Heart left ventricle (tissue), 16 donors: ENCODE measurements at regions of chr14 and their contacts with region 1.

Region 1: DNA sequence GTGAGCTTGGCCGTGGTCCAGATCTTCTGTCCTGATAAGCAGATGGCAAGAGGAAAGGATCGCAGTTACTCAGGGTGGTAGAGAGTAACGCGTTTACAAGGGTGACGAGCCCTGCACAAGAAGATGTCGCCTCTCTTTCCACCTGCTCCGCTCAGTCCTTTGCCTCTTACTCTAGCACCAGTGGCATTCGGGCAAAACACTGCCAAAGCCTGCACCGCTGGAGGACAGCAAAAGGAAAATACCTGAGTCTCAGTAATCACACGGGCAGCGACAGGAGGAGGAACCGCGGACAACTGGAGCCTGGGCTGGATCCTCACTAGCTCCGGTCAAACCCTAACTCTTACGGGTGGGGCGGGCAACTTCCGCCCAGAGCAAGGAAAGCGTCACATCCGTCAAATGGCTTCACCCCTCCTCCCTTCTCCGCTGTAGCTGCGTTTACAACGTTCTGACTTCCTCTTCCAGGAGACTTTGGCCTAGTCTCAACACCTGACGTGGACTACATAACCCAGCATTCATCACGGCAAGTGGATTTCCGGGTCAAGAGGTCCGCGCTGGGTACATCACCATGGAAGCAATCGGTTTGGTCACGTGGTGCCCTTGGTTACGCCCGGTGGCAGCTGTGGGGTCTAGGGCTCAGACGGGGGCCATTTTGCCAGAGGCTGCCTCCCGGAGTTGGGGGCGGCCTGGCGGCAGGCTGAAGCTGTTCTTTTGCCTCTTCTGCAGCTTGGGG is at the starts of genes KLHL28 and TOGARAM1:
- DNase-seq: peak; percentile 94 to 98 (median 98)
- ATAC-seq: peak; percentile 95 to 98 (median 96)
- H3K4me3 ChIP-seq: peak within 1 kb of the TSS; percentile 65 to 97 (median 78)
- H3K27ac ChIP-seq: peak within 1 kb of the TSS; percentile 67 to 93 (median 88)
- H3K4me1 ChIP-seq: peaks cover 8 to 79% (median 46%) of the 10 kb centered on the region in 12 donors
- H3K27me3 ChIP-seq: no peaks in the 10 kb centered on the region
- CTCF ChIP-seq: no peak
- POLR2A ChIP-seq: peak in 1 of 2 donors; percentile 88
- total RNA-seq, gene KLHL28: 6.2 to 13.5 (median 10.5) TPM
- total RNA-seq, gene TOGARAM1: 15.2 to 24.0 (median 19.4) TPM

Region 2: DNA sequence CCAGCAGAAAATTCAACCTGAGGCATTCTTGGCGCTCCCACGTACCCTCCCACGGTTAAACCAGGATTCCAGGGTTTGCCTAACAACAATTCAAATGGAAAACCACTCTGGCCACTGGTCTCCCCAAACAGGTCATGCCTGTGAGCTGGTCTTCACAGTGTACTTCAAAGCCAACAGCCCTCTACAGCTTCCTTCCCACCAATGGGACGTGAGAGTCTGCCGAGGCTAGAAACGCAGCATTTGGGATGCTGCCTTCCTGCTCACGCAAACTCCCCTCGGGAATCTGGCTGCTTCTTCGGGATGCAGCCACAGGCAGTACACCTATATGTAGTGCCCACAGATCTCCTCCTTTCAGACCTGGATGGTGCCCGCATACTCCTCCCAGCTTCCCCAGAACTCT is 149.1 kb before region 1 on chr14:
- intact Hi-C with region 1: no loop called
- DNase-seq: no peak
- ATAC-seq: no peak
- H3K4me3 ChIP-seq: no peak overlapping the region
- H3K27ac ChIP-seq: no peak overlapping the region
- H3K4me1 ChIP-seq: no peaks in the 10 kb centered on the region
- H3K27me3 ChIP-seq: no peaks in the 10 kb centered on the region
- CTCF ChIP-seq: no peak
- POLR2A ChIP-seq: no peak

Region 3: GRCh38 chr14:44897045-44897844 is 64.5 kb before region 1 on chr14:
- intact Hi-C with region 1: loop called in 6 of 10 experiments (anchors 2 to 10 kb)
- DNase-seq: peak; percentile 97 to 99 (median 98)
- ATAC-seq: peak; percentile 99
- H3K4me3 ChIP-seq: peak overlapping the region; percentile 73 to 97 (median 90)
- H3K27ac ChIP-seq: peak overlapping the region; percentile 94 to 100 (median 99)
- H3K4me1 ChIP-seq: peaks cover 0 to 34% (median 16%) of the 10 kb centered on the region in 12 donors
- H3K27me3 ChIP-seq: no peaks in the 10 kb centered on the region
- CTCF ChIP-seq: peak in 1 of 12 donors; percentile 4
- POLR2A ChIP-seq: peak in 1 of 2 donors; percentile 74

Region 4: GRCh38 chr14:44912041-44912869 is 49.5 kb before region 1 on chr14:
- intact Hi-C with region 1: loop called in 3 of 10 experiments (anchors 5 to 10 kb)
- DNase-seq: peak in 2 of 5 donors; percentile 29 to 64
- ATAC-seq: peak in 3 of 4 donors; percentile 50 to 70 (median 59)
- H3K4me3 ChIP-seq: peak overlapping the region; percentile 47 to 73 (median 62)
- H3K27ac ChIP-seq: peak overlapping the region in 3 of 12 donors; percentile 19 to 37 (median 31)
- H3K4me1 ChIP-seq: peaks cover 0 to 20% (median 3%) of the 10 kb centered on the region in 12 donors
- H3K27me3 ChIP-seq: peaks cover 0 to 14% (median 0%) of the 10 kb centered on the region in 9 donors
- CTCF ChIP-seq: no peak
- POLR2A ChIP-seq: no peak

Region 5: GRCh38 chr14:45070215-45070614 is 108.4 kb after region 1 on chr14:
- intact Hi-C with region 1: loop called in 2 of 10 experiments (anchors 10 kb)
- DNase-seq: no peak
- ATAC-seq: no peak
- H3K4me3 ChIP-seq: no peak overlapping the region
- H3K27ac ChIP-seq: no peak overlapping the region
- H3K4me1 ChIP-seq: peaks cover 0 to 19% (median 4%) of the 10 kb centered on the region in 12 donors
- H3K27me3 ChIP-seq: no peaks in the 10 kb centered on the region
- CTCF ChIP-seq: no peak
- POLR2A ChIP-seq: no peak

Region 6: DNA sequence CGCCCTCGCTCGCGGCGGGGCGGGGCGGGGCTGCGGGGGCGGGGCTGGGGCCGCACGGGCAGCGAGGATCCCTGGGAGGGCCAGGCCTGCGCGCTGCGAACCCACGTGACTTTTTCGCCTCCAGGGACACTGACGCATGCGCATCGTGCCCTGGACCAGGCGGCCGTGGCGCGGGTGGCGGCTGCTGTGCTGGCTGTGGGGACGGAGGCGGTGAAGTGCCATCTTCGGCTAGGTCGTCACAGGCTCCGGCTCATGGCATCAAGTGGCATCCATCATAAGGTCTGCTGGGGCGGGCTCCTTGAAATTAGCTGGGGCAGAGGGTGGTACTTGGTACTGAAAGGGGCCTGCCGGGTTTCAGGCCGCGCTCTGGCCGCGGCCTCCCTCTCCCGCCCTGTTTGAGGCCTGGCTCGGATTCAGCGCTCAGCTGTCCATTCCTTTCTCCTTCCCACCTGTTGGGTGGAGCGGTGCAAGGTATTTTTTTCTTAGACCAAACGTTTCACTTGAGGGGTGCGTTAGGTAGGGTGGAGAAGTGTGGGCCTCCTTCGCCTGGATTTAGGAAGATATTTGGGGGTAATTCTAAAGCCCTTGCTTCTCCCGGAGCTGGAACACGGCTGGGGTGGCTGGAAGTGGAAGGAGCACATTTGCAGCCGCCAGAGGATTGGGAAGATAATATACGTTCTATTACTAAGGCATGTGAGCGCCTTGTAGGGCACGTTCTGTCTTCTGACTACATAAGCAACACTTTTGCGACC is 122.4 kb after region 1 on chr14 and contains the start of gene PRPF39:
- intact Hi-C with region 1: loop called in 5 of 10 experiments (anchors 2 to 10 kb)
- DNase-seq: peak; percentile 95 to 97 (median 96)
- ATAC-seq: peak; percentile 99 to 100 (median 99)
- H3K4me3 ChIP-seq: peak within 1 kb of the TSS; percentile 59 to 85 (median 76)
- H3K27ac ChIP-seq: peak within 1 kb of the TSS; percentile 35 to 91 (median 80)
- H3K4me1 ChIP-seq: peaks cover 0 to 51% (median 31%) of the 10 kb centered on the region in 12 donors
- H3K27me3 ChIP-seq: no peaks in the 10 kb centered on the region
- CTCF ChIP-seq: no peak
- POLR2A ChIP-seq: peak in 1 of 2 donors; percentile 84
- total RNA-seq, gene PRPF39: 5.9 to 17.0 (median 13.3) TPM

Region 7: GRCh38 chr14:45095143-45095542 is 133.4 kb after region 1 on chr14:
- intact Hi-C with region 1: no loop called
- DNase-seq: no peak
- ATAC-seq: no peak
- H3K4me3 ChIP-seq: no peak overlapping the region
- H3K27ac ChIP-seq: no peak overlapping the region
- H3K4me1 ChIP-seq: peaks cover 0 to 19% (median 11%) of the 10 kb centered on the region in 12 donors
- H3K27me3 ChIP-seq: no peaks in the 10 kb centered on the region
- CTCF ChIP-seq: no peak
- POLR2A ChIP-seq: no peak

Region 8: DNA sequence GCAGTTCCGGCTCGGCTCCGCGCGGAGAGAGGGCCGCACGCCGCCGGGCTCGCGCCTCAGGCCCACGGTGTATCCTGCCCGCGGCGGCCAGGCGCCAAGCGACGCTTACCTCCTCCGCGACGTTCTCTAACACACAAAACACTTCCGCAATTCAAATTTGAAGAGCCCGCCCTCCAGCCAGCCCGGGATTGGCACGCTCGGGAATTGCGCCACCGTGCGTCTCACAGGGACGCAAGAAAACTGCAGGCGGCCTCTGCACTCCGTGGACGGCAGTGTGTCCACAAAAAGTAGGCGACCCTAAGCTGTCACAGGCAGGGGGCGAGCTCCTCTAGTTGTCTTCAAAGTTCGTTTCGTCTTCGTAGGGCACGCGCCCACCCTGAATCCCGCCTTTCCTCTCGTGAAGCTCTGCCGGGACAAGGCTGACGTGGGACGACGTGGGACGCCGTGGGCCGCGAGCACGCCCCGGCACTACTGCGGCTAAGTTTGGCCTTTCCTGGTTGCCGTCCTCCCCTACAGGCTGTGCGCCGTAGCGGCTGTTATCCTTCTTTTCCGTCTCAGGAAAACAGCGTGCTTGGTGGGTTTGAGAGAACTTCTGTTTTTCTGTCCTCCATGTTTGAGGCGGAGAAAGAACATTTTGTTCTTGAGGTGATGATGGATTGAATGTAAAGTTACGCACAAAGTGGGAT is 291.4 kb after region 1 on chr14 and contains the start of gene MIS18BP1:
- intact Hi-C with region 1: loop called in 3 of 10 experiments (anchors 2 to 5 kb)
- DNase-seq: peak; percentile 96 to 97 (median 97)
- ATAC-seq: peak; percentile 96 to 98 (median 97)
- H3K4me3 ChIP-seq: peak within 1 kb of the TSS; percentile 55 to 88 (median 78)
- H3K27ac ChIP-seq: peak within 1 kb of the TSS; percentile 87 to 98 (median 93)
- H3K4me1 ChIP-seq: peaks cover 0 to 53% (median 20%) of the 10 kb centered on the region in 12 donors
- H3K27me3 ChIP-seq: no peaks in the 10 kb centered on the region
- CTCF ChIP-seq: peak; percentile 63 to 97 (median 83)
- POLR2A ChIP-seq: peak in 1 of 2 donors; percentile 34
- total RNA-seq, gene MIS18BP1: 4.1 to 22.0 (median 7.1) TPM

Region 9: DNA sequence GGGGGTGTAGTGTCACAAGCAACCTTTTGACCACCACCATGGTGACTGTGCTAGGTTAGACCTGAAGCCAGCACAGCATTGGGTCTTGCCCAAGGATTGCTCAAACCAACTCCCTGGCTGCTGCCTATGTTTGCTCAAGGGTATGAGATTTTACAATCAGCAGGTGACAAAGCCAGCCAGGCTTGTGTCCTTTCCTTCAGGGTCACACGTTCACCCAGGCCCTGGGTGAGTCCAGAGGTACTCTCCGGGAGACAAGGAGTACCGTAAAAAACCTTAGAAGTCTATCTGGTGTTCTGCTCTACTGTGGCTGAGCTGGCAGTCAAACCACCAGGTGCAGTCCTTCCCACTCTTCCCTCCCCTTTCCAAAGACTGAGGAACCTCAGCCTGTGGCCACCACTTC is 530.1 kb after region 1 on chr14:
- intact Hi-C with region 1: no loop called
- DNase-seq: no peak
- ATAC-seq: peak in 1 of 4 donors; percentile 38
- H3K4me3 ChIP-seq: no peak overlapping the region
- H3K27ac ChIP-seq: no peak overlapping the region
- H3K4me1 ChIP-seq: no peaks in the 10 kb centered on the region
- H3K27me3 ChIP-seq: no peaks in the 10 kb centered on the region
- CTCF ChIP-seq: no peak
- POLR2A ChIP-seq: no peak